Psoas muscle (tissue), 8 donors: ENCODE measurements at regions of chr1 and their contacts with region 1.

Region 1: GRCh38 chr1:151739590-151740375 is 18.5 kb downstream of the RIIAD1 start:
- DNase-seq: no peak
- ATAC-seq: peak in 2 of 4 donors; percentile 23 to 69
- H3K4me3 ChIP-seq: no peak overlapping the region
- H3K27ac ChIP-seq: no peak overlapping the region
- H3K4me1 ChIP-seq: peaks cover 5% of the 10 kb centered on the region
- H3K27me3 ChIP-seq: no peaks in the 10 kb centered on the region
- CTCF ChIP-seq: no peak

Region 2: GRCh38 chr1:151594143-151594625 is 145.6 kb before region 1 on chr1:
- intact Hi-C with region 1: loop called (anchors 2 to 5 kb)
- DNase-seq: peak; percentile 72 to 84
- ATAC-seq: peak; percentile 69 to 93 (median 78)
- H3K4me3 ChIP-seq: no peak overlapping the region
- H3K27ac ChIP-seq: no peak overlapping the region
- H3K4me1 ChIP-seq: no peaks in the 10 kb centered on the region
- H3K27me3 ChIP-seq: no peaks in the 10 kb centered on the region
- CTCF ChIP-seq: peak; percentile 94